HEK293T (cell line): ENCODE measurements at regions of chr6 and their contacts with region 1.

Region 1: GRCh38 chr6:8063761-8064637 is at the start of gene BLOC1S5:
- DNase-seq: peak; percentile 91

Region 2: DNA sequence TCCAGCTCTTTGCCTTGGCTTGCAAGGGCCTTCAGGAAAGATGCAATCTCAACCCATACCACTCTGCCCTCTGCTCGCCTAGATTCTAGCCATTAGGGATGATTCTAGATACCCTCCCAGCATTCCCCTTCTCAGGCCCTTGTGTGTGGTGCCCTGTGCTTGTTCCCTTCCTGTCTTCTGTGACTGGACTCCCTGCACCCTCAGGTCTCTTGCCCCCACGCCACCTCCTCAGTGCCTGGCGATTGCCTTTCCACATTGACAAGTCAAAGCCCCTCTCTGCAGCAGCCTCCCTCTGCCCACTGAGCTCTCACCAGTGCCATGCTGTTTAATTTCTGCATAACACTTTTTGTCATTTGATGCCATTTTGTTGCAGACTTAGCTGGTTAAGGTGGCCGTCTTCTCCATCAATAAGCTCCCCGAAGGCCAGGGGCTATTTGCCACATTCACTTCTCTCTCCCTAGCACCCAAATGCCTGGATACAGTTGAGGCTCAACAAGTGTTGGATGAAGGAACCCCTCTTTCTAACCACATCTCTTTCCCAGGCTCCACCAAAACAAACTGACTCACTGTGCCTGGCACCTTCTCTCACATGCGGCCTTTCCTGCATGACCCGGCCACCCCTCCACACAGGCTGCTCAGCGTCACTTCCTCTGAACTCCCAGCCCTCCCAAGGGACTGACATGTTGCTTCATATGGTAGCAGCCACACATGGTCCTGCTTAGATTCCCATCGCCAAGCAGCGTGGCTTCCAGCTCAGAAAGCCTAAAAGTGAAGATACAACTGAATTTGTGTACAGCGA is 148.8 kb before region 1 on chr6:
- CTCF ChIA-PET with region 1: no interaction called
- POLR2A ChIA-PET with region 1: no interaction called
- DNase-seq: no peak

Region 3: GRCh38 chr6:8085053-8085511 is 21.1 kb after region 1 on chr6:
- CTCF ChIA-PET with region 1: no interaction called
- POLR2A ChIA-PET with region 1: interaction called, 12 read pairs
- DNase-seq: no peak

Region 4: DNA sequence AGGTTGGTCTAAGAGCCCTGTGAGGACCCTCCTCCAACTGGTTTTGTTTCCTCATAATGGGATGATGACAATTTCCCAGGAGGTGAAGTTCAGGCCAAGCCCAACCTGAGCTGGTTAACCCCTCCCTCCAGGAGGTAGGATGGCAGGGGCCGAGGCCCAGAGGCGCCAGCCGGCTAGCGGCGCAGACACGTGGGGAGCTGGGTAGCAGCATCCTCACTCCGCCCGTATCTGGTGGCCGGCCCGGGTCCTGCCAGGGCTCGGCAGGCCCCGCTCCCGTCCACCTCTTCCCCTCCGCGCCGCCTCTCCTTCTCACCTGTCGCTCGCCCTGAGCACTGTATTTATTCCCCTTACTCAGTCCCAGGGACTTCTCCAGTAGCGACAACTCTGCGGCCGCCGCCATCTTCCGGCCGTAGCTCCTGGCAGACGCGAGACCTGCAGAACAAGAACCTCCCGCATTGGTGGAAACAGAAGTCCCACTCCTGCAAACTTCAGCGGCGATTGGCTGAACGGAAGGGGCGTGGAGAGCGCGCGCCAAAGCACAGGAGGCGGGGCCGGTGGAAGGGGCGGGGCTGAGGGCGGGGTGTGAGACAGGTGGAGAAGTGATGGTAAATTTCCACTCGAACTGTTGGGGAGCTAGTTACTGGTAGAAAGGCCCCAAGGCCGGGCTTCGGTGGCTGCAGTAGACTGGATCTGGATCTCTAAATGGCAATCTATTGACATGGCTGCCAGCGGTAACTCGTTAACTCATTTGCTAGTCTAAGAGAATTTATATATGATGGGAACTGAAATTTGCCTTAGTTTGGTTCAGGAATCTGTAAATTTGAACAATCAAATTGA is 38.3 kb after region 1 on chr6 and contains the start of gene EEF1E1:
- CTCF ChIA-PET with region 1: no interaction called
- POLR2A ChIA-PET with region 1: interaction called, 24 read pairs
- DNase-seq: peak; percentile 95

Region 5: GRCh38 chr6:8219352-8219943 is 155.4 kb after region 1 on chr6:
- CTCF ChIA-PET with region 1: no interaction called
- POLR2A ChIA-PET with region 1: no interaction called
- DNase-seq: peak; percentile 48